Esophagus muscularis mucosa (tissue), 4 donors: ENCODE measurements at regions of chr15 and their contacts with region 1.

Region 1: DNA sequence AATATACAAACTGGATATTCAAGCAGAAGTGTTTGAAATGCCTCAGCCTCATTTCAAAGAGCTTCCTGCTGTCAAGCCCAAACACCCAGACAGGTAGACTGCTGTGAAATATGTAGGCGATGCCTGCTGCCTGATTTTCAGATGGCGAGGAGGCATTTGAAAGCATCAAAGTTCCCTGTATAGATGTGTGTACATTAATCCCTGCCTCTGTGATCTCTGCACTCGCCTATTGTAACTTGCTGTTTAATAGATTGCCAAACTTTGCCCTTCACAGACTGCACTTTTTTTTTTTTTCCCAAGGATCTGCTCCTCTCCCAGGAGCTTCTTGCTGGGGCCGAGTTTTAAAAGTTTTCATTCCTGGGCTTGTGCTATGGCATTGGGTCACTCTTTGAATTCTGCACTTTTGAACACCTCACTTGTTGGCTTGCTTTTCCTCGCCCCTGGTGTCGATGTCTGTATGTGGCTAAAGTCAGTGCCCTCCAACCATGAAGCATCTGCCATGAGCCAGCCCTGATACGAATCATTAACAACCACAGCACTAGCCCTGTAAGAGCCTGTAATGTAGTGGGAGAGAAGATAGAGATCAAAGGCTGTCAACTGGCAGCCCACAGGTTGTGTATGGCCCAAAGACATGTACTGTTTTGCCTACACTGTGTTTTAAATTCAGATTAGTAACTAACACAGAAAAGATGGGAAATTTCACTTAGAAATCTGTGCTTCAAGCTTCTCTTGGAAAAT is 287.6 kb upstream of the ICE2 start:
- DNase-seq: no peak
- H3K4me3 ChIP-seq: no peak overlapping the region
- H3K27ac ChIP-seq: no peak overlapping the region
- H3K4me1 ChIP-seq: peaks cover 0 to 16% (median 7%) of the 10 kb centered on the region in 4 donors
- H3K27me3 ChIP-seq: no peaks in the 10 kb centered on the region
- CTCF ChIP-seq: no peak
- EP300 ChIP-seq: no peak
- POLR2A ChIP-seq: no peak

Region 2: DNA sequence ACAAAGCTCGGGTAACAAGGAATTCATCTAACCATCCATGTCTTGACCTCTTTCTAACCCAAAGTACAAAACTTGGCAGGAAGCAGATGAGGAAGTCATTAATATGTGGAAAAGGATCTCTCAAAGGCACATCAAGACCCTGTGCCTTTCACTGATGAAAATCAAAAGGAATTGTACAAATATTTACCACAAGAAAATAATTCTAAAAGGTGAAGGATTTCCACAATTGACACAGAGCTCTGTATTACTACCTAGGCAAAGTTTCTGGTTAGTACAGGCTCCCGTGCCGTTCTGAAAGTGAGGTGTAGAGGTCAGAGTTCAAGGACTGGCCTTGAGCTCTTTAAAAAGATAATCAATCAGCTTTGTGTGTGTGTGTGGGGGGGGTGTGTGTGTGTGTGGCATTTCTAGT is 47.9 kb before region 1 on chr15:
- intact Hi-C with region 1: loop called (anchors 5 kb)
- DNase-seq: no peak
- H3K4me3 ChIP-seq: no peak overlapping the region
- H3K27ac ChIP-seq: no peak overlapping the region
- H3K4me1 ChIP-seq: peaks cover 0 to 15% (median 10%) of the 10 kb centered on the region in 4 donors
- H3K27me3 ChIP-seq: no peaks in the 10 kb centered on the region
- CTCF ChIP-seq: no peak
- EP300 ChIP-seq: no peak
- POLR2A ChIP-seq: no peak